AG04449 (cell line): ENCODE measurements at regions of chr1 and their contacts with region 1.

Region 1: DNA sequence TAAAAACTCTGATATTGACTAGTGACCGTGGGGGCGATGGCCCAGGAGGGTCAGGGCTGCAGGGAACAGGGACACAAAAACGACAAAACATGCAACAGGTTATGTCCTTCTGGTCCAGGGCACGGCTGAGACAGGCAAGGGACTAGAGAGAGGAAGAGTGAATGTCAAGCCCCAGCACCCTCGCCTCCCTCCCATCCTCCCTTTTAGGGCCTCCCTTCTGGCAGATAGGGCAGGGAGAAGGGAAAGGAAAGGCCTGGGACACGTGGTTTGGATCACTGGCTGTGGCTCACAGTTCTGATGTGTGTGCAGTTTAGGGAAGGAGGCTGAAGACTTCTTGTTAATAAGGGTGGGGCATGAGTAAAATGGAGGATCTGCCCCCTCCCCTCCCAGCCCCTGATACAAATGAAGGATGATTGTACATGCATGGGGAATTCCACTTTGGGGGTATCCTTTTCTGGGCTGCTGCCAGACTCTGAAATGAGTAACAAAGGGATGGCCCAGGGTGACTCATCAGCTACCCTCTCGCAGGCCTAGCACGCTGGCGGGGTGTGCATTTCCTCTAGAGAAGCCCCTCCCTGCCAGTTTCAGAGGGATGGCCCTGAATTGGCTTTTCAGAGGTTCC is 14.2 kb downstream of the CAPN2 start:
- DNase-seq: peak; percentile 75
- H3K4me3 ChIP-seq: no peak overlapping the region; the same call in 1 of the 2 replicates
- CTCF ChIP-seq: no peak

Region 2: GRCh38 chr1:223712194-223712849 is 14.2 kb before region 1 on chr1 and contains the start of gene CAPN2:
- CTCF ChIA-PET with region 1: interaction called, 13 read pairs
- POLR2A ChIA-PET with region 1: interaction called, 8 read pairs
- DNase-seq: no peak
- H3K4me3 ChIP-seq: peak within 1 kb of the TSS; percentile 95
- CTCF ChIP-seq: peak; percentile 73